Tibial artery (tissue), 4 donors: ENCODE measurements at regions of chr2 and their contacts with region 1.

Region 1: GRCh38 chr2:145609951-145610350 is 1090.0 kb upstream of the ZEB2 start:
- DNase-seq: no peak
- H3K4me3 ChIP-seq: no peak overlapping the region
- H3K27ac ChIP-seq: no peak overlapping the region
- H3K4me1 ChIP-seq: no peaks in the 10 kb centered on the region
- H3K27me3 ChIP-seq: no peaks in the 10 kb centered on the region
- CTCF ChIP-seq: no peak

Region 2: DNA sequence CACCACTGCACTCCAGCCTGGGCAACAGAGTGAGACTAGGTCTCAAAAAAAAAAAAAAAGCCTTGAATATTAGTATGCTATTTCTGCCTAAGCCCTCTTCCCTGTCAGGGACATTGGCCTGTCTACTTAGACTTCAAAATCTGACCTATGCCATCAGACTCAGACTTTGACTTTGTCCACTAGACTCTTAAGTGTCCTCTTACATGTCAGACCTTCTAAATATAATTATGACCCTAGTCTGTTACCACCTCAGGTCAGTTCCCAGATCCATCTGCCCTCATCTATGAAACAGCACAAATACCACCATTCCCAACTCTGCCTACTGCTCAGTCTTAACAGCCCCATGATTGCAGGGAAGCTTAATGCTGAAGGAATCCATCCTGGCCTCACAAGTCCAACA is 1334.6 kb before region 1 on chr2:
- intact Hi-C with region 1: loop called (anchors 5 kb)
- DNase-seq: no peak
- H3K4me3 ChIP-seq: no peak overlapping the region
- H3K27ac ChIP-seq: no peak overlapping the region
- H3K4me1 ChIP-seq: no peaks in the 10 kb centered on the region
- H3K27me3 ChIP-seq: no peaks in the 10 kb centered on the region
- CTCF ChIP-seq: no peak

Region 3: GRCh38 chr2:145669301-145669700 is 59.4 kb after region 1 on chr2:
- intact Hi-C with region 1: no loop called
- DNase-seq: no peak
- H3K4me3 ChIP-seq: no peak overlapping the region
- H3K27ac ChIP-seq: no peak overlapping the region
- H3K4me1 ChIP-seq: no peaks in the 10 kb centered on the region
- H3K27me3 ChIP-seq: no peaks in the 10 kb centered on the region
- CTCF ChIP-seq: no peak